ENCODE measurements at regions of chr13 and their contacts with region 1.

Region 1: GRCh38 chr13:20495082-20496023 is 30.3 kb downstream of the CRYL1 start:
- DNase-seq: no peak
- ATAC-seq: peak; percentile 79 to 90 (median 86)
- H3K4me3 ChIP-seq: peak overlapping the region; percentile 46
- H3K27ac ChIP-seq: no peak overlapping the region
- H3K4me1 ChIP-seq: no peaks in the 10 kb centered on the region
- H3K27me3 ChIP-seq: no peaks in the 10 kb centered on the region
- CTCF ChIP-seq: peak; percentile 97

Region 2: GRCh38 chr13:20580257-20580656 is 84.9 kb after region 1 on chr13:
- intact Hi-C with region 1: loop called in 1 of 2 experiments (anchors 5 kb)
- DNase-seq: no peak
- ATAC-seq: no peak
- H3K4me3 ChIP-seq: no peak overlapping the region
- H3K27ac ChIP-seq: no peak overlapping the region
- H3K4me1 ChIP-seq: no peaks in the 10 kb centered on the region
- H3K27me3 ChIP-seq: no peaks in the 10 kb centered on the region
- CTCF ChIP-seq: no peak

Region 3: GRCh38 chr13:20696073-20696472 is 200.7 kb after region 1 on chr13:
- intact Hi-C with region 1: loop called (anchors 5 to 10 kb)
- DNase-seq: no peak
- ATAC-seq: no peak
- H3K4me3 ChIP-seq: no peak overlapping the region
- H3K27ac ChIP-seq: no peak overlapping the region
- H3K4me1 ChIP-seq: no peaks in the 10 kb centered on the region
- H3K27me3 ChIP-seq: peaks cover 0 to 13% (median 0%) of the 10 kb centered on the region in 3 donors
- CTCF ChIP-seq: no peak

Region 4: GRCh38 chr13:20703780-20704445 is 208.6 kb after region 1 on chr13:
- intact Hi-C with region 1: loop called (anchors 5 to 10 kb)
- DNase-seq: peak; percentile 78 to 88
- ATAC-seq: peak; percentile 87 to 89 (median 88)
- H3K4me3 ChIP-seq: peak overlapping the region; percentile 63
- H3K27ac ChIP-seq: peak overlapping the region; percentile 65
- H3K4me1 ChIP-seq: peaks cover 13% of the 10 kb centered on the region
- H3K27me3 ChIP-seq: peaks cover 0 to 22% (median 0%) of the 10 kb centered on the region in 3 donors
- CTCF ChIP-seq: peak; percentile 60

Region 5: DNA sequence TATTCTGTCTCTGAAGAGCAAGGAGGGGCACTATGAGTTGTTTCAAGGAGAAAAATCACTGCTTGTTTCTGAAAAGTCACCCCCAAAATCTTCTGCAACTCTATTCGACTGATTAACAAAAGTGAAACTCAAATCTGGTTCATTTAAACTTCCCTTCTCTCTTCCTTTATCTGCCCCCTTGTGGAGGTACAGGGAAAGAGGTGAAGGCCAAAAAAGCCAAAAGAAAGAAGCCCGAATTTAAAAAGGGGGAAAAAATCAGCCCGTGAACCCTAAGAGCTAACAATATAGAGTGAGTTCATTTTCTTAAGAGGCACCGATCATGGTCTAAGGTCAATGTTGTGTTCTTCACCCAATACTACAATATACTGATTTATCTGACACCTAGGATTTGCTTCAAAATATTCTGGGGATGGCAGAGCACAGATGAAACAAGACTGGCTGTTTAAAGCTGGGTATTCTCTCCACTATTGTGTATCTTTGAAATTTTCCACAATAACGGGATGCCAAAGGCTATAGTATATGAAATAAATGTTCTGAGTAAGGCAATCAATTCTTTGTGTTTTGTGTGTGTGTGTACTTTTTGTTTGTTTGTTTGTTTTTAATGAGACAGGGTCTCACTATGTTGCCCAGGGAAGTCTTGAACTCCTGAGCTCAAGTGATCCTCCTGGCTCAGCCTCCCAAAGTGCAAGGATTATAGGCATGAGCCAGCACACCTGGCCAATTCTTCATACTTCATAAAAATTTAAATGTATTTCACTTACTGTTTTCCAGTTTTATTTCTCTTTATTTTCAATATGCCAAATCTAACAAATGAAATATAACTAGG is 333.4 kb after region 1 on chr13:
- intact Hi-C with region 1: loop called in 1 of 2 experiments (anchors 5 kb)
- DNase-seq: no peak
- ATAC-seq: peak in 2 of 4 donors; percentile 35 to 50
- H3K4me3 ChIP-seq: peak overlapping the region; percentile 59
- H3K27ac ChIP-seq: peak overlapping the region; percentile 89
- H3K4me1 ChIP-seq: peaks cover 24% of the 10 kb centered on the region
- H3K27me3 ChIP-seq: no peaks in the 10 kb centered on the region
- CTCF ChIP-seq: peak; percentile 84

Region 6: GRCh38 chr13:20924758-20925394 is 429.5 kb after region 1 on chr13:
- intact Hi-C with region 1: loop called (anchors 2 to 5 kb)
- DNase-seq: peak; percentile 65 to 79
- ATAC-seq: peak; percentile 55 to 83 (median 68)
- H3K4me3 ChIP-seq: no peak overlapping the region
- H3K27ac ChIP-seq: no peak overlapping the region
- H3K4me1 ChIP-seq: no peaks in the 10 kb centered on the region
- H3K27me3 ChIP-seq: no peaks in the 10 kb centered on the region
- CTCF ChIP-seq: peak; percentile 82

Region 7: GRCh38 chr13:21137696-21138095 is 642.3 kb after region 1 on chr13:
- intact Hi-C with region 1: no loop called
- DNase-seq: no peak
- ATAC-seq: no peak
- H3K4me3 ChIP-seq: no peak overlapping the region
- H3K27ac ChIP-seq: no peak overlapping the region
- H3K4me1 ChIP-seq: peaks cover 13% of the 10 kb centered on the region
- H3K27me3 ChIP-seq: no peaks in the 10 kb centered on the region
- CTCF ChIP-seq: no peak